ENCODE measurements at regions of chr11 and their contacts with region 1.

Region 1: GRCh38 chr11:19903620-19904069 is 191.0 kb downstream of the NAV2 start:
- DNase-seq: peak; percentile 62
- ATAC-seq: peak; percentile 90
- H3K4me3 ChIP-seq: no peak overlapping the region
- H3K27ac ChIP-seq: no peak overlapping the region
- H3K4me1 ChIP-seq: peaks cover 3 to 4% of the 10 kb centered on the region in 2 experiments; a peak in 3 of 4 replicates
- H3K27me3 ChIP-seq: no peaks in the 10 kb centered on the region
- CTCF ChIP-seq: peak; percentile 73 to 85 (median 76); a peak in 5 of 6 replicates
- POLR2A ChIP-seq: no peak
- RAD21 ChIP-seq: peak; percentile 85

Region 2: GRCh38 chr11:19561011-19561410 is 342.6 kb before region 1 on chr11:
- CTCF ChIA-PET with region 1: interaction called, 51 read pairs
- POLR2A ChIA-PET with region 1: no interaction called
- RAD21 ChIA-PET with region 1: interaction called, 4 to 5 read pairs
- intact Hi-C with region 1: loop called (anchors 1 kb)
- DNase-seq: no peak
- ATAC-seq: no peak
- H3K4me3 ChIP-seq: no peak overlapping the region
- H3K27ac ChIP-seq: no peak overlapping the region
- H3K4me1 ChIP-seq: peaks cover 0 to 6% of the 10 kb centered on the region in 2 experiments; a peak in 1 of 4 replicates
- H3K27me3 ChIP-seq: peaks cover 13% of the 10 kb centered on the region; the same call in 1 of the 2 replicates
- CTCF ChIP-seq: no peak
- POLR2A ChIP-seq: no peak
- RAD21 ChIP-seq: no peak

Region 3: DNA sequence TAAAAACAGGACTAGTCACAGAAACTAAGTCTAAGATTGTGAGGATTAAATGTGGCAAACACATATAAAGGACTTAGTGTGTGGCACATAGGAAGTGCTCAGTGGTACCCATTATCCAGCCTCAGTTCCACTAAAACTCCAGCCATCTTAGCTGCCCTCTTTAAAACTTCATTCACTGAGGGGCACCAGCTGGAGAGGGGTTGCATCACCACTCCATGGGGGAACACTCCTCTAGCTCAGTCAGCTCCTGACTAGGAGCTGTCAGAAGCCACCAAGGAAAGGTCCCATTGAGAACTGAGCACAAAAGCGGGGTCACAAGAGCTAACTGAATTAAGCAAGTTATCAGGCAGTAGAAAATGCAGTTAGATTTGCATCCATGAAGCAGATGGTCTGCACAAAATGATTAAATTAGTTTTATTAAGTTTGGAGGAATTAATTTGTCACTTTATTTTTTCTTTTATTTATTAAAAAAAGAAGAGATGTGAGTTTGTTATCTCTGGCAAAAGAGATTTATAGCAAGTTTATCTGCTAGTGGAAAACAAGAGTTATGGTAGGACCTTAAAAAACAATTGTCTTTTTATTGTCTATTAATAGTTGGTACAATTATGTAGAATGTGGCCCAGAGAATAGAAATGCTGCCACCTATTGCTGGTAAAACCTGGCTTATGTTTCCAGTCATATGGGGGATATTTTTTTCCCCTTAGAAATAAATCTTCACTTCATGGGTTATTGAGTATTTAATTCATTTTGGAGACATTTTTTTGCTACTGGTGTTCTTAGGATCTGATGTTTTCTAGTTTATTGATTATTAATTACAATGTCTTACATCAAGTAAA is 95.4 kb before region 1 on chr11:
- CTCF ChIA-PET with region 1: no interaction called
- POLR2A ChIA-PET with region 1: no interaction called
- RAD21 ChIA-PET with region 1: interaction called in 1 of 2 experiments, 4 read pairs
- intact Hi-C with region 1: loop called (anchors 5 kb)
- DNase-seq: no peak
- ATAC-seq: no peak
- H3K4me3 ChIP-seq: no peak overlapping the region
- H3K27ac ChIP-seq: no peak overlapping the region
- H3K4me1 ChIP-seq: peaks cover 8 to 10% of the 10 kb centered on the region in 2 experiments; a peak in 3 of 4 replicates
- H3K27me3 ChIP-seq: no peaks in the 10 kb centered on the region
- CTCF ChIP-seq: peak; percentile 24 to 28 (median 26); a peak in 2 of 6 replicates
- POLR2A ChIP-seq: no peak
- RAD21 ChIP-seq: peak; percentile 52

Region 4: DNA sequence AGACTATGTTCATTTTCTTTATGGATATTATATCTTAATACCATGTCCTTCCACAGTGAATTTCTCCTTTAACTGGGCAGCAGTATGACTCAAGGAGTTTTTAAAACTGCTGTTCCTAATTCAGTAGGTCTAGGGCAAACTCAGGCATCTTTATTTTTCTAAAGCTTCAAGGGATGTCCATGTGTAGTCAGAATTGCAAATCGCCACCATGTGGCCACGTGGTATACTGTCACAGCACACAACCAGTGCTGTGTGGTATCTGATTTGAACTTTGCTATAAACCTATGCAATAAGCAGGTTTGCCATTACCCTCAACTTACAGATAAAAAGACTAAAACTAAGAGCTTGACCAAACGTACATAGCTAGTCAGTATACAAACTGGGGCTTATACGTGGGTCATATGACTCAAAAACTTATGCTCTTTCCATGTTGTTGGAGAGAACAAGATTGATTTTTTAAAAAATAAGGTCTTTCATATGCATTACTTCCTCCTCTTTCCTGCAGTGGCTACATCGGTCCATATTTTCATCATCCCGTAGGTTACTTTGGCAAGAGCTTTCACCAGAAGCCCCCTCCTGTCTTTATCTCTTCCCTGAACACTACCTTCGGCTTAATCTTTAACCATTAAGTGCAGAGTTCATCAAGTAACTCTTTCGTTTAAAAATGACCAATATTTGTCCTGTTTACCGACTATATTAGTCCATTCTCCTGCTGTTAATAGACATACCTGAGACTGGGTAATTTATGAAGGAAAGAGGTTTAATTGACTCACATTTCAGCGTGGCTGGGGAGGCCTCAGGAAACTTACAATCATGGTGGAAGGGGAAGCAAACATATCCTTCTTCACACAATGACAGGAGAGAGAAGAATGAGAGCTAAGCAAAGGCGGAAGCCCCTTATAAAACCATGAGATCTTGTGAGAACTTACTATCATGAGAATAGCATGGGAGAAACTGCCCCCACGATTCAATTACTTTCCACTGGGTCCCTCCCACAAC is 451.9 kb after region 1 on chr11:
- CTCF ChIA-PET with region 1: interaction called, 5 read pairs
- POLR2A ChIA-PET with region 1: no interaction called
- RAD21 ChIA-PET with region 1: no interaction called
- intact Hi-C with region 1: loop called (anchors 10 kb)
- DNase-seq: peak; percentile 54
- ATAC-seq: peak; percentile 89
- H3K4me3 ChIP-seq: no peak overlapping the region
- H3K27ac ChIP-seq: no peak overlapping the region
- H3K4me1 ChIP-seq: peaks cover 0 to 12% of the 10 kb centered on the region in 2 experiments; a peak in 2 of 4 replicates
- H3K27me3 ChIP-seq: no peaks in the 10 kb centered on the region
- CTCF ChIP-seq: peak; percentile 28 to 70 (median 64); a peak in 5 of 6 replicates
- POLR2A ChIP-seq: no peak
- RAD21 ChIP-seq: peak; percentile 35; the same call in 1 of the 2 replicates